Right cardiac atrium (tissue), 5 donors: ENCODE measurements at regions of chr3 and their contacts with region 1.

Region 1: GRCh38 chr3:99640214-99640851 is 1.9 kb downstream of the COL8A1 start:
- DNase-seq: no peak
- ATAC-seq: no peak
- H3K4me3 ChIP-seq: peak overlapping the region; percentile 12
- H3K27ac ChIP-seq: no peak overlapping the region
- H3K4me1 ChIP-seq: no peaks in the 10 kb centered on the region
- H3K27me3 ChIP-seq: no peaks in the 10 kb centered on the region

Region 2: GRCh38 chr3:99747915-99748314 is 107.6 kb after region 1 on chr3:
- intact Hi-C with region 1: loop called in 1 of 4 experiments (anchors 5 kb)
- DNase-seq: peak in 1 of 3 donors; percentile 24
- ATAC-seq: peak; percentile 69 to 72
- H3K4me3 ChIP-seq: no peak overlapping the region
- H3K27ac ChIP-seq: no peak overlapping the region
- H3K4me1 ChIP-seq: no peaks in the 10 kb centered on the region
- H3K27me3 ChIP-seq: no peaks in the 10 kb centered on the region

Region 3: GRCh38 chr3:99859825-99860224 is 219.5 kb after region 1 on chr3:
- intact Hi-C with region 1: no loop called
- DNase-seq: no peak
- ATAC-seq: peak; percentile 38 to 39
- H3K4me3 ChIP-seq: no peak overlapping the region
- H3K27ac ChIP-seq: no peak overlapping the region
- H3K4me1 ChIP-seq: peaks cover 5% of the 10 kb centered on the region
- H3K27me3 ChIP-seq: no peaks in the 10 kb centered on the region